H1 (cell line): ENCODE measurements at regions of chr14 and their contacts with region 1.

Region 1: GRCh38 chr14:68951042-68951914 is 27.8 kb downstream of the ACTN1 start:
- DNase-seq: no peak
- H3K4me3 ChIP-seq: no peak overlapping the region
- H3K27ac ChIP-seq: no peak overlapping the region
- H3K4me1 ChIP-seq: peaks cover 0 to 10% (median 6%) of the 10 kb centered on the region in 4 experiments; a peak in 6 of 7 replicates
- H3K27me3 ChIP-seq: no peaks in the 10 kb centered on the region
- CTCF ChIP-seq: no peak
- EP300 ChIP-seq: no peak
- POLR2A ChIP-seq: no peak; a peak in 1 of 3 replicates
- RAD21 ChIP-seq: no peak

Region 2: DNA sequence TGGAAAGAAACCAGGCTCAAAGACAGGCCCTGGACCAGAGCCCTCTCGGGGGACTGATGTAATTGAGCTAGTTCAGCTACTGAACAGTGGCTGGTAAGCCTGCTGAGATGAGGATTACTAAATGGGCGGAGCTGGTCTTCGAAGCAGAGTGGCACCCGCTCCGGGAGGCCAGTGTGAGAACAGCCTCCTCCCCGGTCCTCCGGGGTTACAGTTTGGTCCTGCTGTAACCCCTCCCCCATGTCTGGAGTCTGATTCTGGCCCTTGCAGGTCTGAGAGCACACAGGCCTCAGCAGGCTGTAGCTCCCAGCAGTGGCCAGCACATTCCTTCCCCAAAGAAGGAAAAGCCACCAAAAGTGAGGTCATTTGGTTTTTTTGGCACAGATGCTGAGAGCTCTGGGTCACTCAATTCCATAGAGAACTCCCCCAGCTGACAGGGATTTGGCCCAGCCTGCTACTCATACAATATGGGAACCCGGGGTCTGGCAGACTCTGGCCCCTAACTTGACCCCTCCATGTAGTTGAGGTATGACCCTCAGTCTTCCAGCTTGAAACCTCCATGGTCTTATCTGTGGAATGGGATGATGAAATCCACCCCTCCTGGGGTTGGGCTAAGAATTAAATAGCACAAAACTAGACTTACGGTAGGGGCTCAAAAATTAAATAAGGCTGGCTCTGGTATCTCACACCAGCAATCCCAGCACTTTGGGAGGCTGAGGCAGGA is 11.2 kb before region 1 on chr14:
- CTCF ChIA-PET with region 1: interaction called, 291 read pairs
- POLR2A ChIA-PET with region 1: interaction called, 5 read pairs
- DNase-seq: no peak
- H3K4me3 ChIP-seq: no peak overlapping the region
- H3K27ac ChIP-seq: no peak overlapping the region
- H3K4me1 ChIP-seq: peaks cover 2 to 40% (median 24%) of the 10 kb centered on the region in 4 experiments
- H3K27me3 ChIP-seq: no peaks in the 10 kb centered on the region
- CTCF ChIP-seq: no peak
- EP300 ChIP-seq: no peak
- POLR2A ChIP-seq: no peak
- RAD21 ChIP-seq: no peak